Caco-2 (cell line): ENCODE measurements at regions of chr1 and their contacts with region 1.

Region 1: DNA sequence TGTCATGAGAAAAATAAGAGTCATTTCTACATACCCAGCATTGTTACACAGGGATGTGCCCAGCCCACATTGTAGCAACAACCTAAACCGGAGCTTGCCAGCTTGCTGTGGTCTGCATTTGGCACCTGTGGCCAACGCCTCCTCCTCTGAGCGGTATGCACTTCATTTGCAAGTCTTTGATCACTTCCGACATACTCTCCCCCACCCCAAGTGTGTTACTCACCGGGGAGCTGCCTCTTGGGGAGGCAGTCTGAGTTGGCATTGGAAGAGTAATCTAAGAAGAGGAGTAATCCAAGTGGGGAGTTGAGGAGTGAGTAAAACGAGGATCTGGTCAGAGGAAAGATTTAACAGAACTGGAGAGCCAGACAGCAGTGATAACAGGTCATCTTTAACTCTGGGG is 3.8 kb downstream of the BCL9 start:
- DNase-seq: no peak
- H3K4me3 ChIP-seq: no peak overlapping the region
- H3K4me3 Mint-ChIP-seq: no peak overlapping the region
- H3K27ac Mint-ChIP-seq: no peak overlapping the region
- H3K4me1 ChIP-seq: peaks cover 13% of the 10 kb centered on the region
- H3K4me1 Mint-ChIP-seq: peaks cover 7% of the 10 kb centered on the region
- H3K27me3 ChIP-seq: no peaks in the 10 kb centered on the region
- H3K27me3 Mint-ChIP-seq: no peaks in the 10 kb centered on the region
- CTCF ChIP-seq: no peak

Region 2: DNA sequence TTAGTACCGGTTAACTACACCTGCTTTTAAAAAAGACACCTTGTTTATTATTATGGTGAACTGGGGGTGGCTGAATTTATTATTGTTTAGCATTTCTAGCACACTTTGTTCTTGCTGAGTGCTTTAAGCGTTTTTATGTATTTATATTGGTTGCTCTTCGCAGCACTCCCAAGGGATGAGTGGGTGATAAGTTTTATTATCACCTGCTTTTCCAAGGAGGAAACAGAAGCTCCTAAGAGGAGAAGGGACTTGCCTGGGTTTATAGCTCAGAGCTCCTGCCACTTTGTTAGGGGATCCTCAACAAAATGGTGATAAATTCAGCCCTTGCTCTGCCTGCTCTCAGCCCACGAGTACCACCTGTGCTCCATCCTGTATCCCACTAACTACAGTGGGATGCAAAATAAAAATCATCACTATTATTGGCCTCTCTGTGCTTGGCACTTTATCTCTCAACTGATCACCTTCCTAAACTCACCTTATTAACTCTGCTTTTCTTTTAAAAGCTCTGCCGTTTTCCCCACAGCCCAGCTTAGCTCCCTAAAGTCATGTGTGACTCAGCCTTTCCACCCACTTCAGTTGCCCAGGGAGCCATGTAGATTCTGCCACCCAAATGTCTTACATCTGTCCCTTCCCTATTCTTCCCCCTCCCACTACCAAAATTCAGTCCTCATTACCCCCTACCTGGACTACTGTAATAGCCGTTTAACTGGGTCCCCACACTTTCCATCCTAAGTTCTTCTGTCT is 40.7 kb after region 1 on chr1:
- CTCF ChIA-PET with region 1: no interaction called
- POLR2A ChIA-PET with region 1: no interaction called
- intact Hi-C with region 1: loop called (anchors 5 kb)
- DNase-seq: no peak
- H3K4me3 ChIP-seq: no peak overlapping the region
- H3K4me3 Mint-ChIP-seq: no peak overlapping the region
- H3K27ac Mint-ChIP-seq: no peak overlapping the region
- H3K4me1 ChIP-seq: peaks cover 19% of the 10 kb centered on the region
- H3K4me1 Mint-ChIP-seq: peaks cover 8% of the 10 kb centered on the region
- H3K27me3 ChIP-seq: no peaks in the 10 kb centered on the region
- H3K27me3 Mint-ChIP-seq: peaks cover 3% of the 10 kb centered on the region
- CTCF ChIP-seq: no peak

Region 3: DNA sequence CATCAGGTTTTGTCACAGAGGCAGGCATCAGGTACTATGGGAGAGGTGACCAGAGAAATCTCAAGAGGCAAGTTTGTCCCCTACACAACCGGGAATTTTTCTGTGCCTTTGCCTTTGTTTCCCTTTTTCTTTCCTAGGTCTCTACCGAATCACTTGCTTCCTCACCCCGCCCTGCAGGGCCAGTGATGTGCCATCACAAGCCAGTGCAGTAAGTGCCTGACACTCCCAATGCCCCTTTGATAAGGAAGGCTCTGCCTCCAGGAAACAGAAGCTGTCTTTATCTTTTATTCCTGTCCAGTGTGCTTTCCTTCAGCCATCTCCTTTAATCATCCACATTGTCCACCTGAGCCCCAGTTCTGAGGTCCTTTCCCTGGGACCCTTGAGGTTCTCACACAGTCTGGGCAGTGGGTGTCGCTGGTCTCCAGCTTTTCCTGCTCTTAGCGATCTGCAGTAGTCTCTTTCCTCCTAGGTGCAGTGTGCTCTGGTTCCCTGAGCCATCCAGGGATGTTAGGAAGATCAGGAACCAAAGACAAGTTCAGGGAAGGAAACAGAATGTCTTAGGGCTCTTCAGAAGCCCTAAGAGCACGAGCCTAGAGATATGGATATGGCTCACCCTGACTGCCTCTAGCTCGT is 178.7 kb after region 1 on chr1:
- CTCF ChIA-PET with region 1: no interaction called
- POLR2A ChIA-PET with region 1: no interaction called
- intact Hi-C with region 1: no loop called
- DNase-seq: peak; percentile 70 to 74
- H3K4me3 ChIP-seq: no peak overlapping the region
- H3K4me3 Mint-ChIP-seq: no peak overlapping the region
- H3K27ac Mint-ChIP-seq: no peak overlapping the region
- H3K4me1 ChIP-seq: peaks cover 26% of the 10 kb centered on the region
- H3K4me1 Mint-ChIP-seq: peaks cover 21% of the 10 kb centered on the region
- H3K27me3 ChIP-seq: no peaks in the 10 kb centered on the region
- H3K27me3 Mint-ChIP-seq: no peaks in the 10 kb centered on the region
- CTCF ChIP-seq: peak; percentile 70 to 85